ENCODE measurements at regions of chr1 and their contacts with region 1.

Region 1: GRCh38 chr1:181459067-181459466 is 24.2 kb upstream of the CACNA1E start:
- DNase-seq: no peak
- ATAC-seq: peak; percentile 18; the same call in 1 of the 3 replicates
- H3K4me3 ChIP-seq: no peak overlapping the region
- H3K27ac ChIP-seq: no peak overlapping the region
- H3K4me1 ChIP-seq: no peaks in the 10 kb centered on the region
- H3K27me3 ChIP-seq: no peaks in the 10 kb centered on the region
- CTCF ChIP-seq: no peak
- EP300 ChIP-seq: no peak
- POLR2A ChIP-seq: no peak
- RAD21 ChIP-seq: no peak

Region 2: DNA sequence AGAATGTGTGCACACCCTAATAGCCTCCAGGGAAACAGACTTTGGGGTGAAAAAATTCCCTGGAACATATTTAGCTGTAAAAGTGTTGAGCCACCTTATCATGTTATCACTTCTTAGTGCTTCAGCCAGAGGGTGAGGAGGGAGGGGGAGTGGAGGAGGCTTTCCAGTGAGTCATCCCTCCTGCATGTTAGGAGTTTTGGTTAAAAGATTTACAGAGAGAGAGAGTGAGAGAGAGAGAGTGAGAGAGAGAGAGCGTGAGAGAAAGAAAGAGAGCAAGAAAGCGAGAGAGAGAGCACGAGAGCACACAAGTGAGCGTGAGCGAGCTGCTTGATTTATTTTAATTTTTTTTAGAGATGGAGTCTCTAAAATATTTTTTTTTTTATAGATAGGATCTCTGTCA is 10.8 kb after region 1 on chr1:
- CTCF ChIA-PET with region 1: no interaction called
- POLR2A ChIA-PET with region 1: interaction called, 7 read pairs
- RAD21 ChIA-PET with region 1: interaction called, 6 read pairs
- SMC1A ChIA-PET with region 1: interaction called, 59 read pairs
- in situ Hi-C with region 1: no loop called
- intact Hi-C with region 1: no loop called
- DNase-seq: no peak
- ATAC-seq: no peak
- H3K4me3 ChIP-seq: no peak overlapping the region
- H3K27ac ChIP-seq: no peak overlapping the region
- H3K4me1 ChIP-seq: no peaks in the 10 kb centered on the region
- H3K27me3 ChIP-seq: no peaks in the 10 kb centered on the region
- CTCF ChIP-seq: no peak
- EP300 ChIP-seq: no peak
- POLR2A ChIP-seq: no peak
- RAD21 ChIP-seq: no peak

Measured in GM12878 (cell line).